GM13976 (cell line): ENCODE measurements at regions of chr5 and their contacts with region 1.

Region 1: DNA sequence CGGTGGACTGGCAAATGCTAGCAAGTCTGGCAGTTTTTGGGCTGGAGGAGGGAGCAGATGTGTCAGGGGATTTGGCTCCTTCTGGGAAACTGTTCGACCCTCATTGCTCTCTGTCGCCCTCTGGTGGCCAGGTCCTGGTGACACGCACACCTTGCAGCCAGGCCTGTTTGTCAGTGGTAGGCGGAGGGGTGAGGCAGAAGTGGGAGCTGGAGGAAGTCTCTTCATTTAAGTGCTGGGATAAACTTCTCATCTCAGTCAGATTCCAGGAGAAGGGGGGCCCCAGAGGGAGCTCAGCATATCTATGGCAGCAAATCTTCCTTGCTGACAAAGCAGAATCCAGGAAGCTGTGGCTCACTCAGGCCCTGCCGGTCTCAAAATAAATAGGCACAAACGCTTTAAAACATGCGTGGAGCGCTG is 326.5 kb downstream of the ZSWIM6 start:
- DNase-seq: peak; percentile 76
- CTCF ChIP-seq: peak; percentile 99

Region 2: DNA sequence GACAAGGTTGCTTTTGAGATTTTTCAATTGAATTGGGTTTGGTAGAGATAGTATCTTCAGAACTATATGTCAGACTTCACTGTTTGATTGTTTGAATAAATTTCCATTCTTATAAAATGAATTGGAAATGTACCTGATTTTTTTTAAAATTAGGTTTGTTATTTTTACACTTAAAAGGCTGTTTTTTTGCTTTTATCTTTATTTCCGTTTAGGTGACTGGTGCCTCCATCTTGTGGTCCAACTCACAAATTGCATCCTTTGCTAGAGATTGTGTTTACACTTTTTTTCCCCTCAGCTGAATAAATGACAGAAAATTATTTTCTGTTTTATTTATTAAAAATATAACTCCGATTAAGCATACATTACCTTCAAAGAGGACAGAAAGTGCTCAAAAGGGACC is 698.0 kb before region 1 on chr5:
- in situ Hi-C with region 1: loop called (anchors 25 kb)
- DNase-seq: peak; percentile 21
- CTCF ChIP-seq: no peak